ENCODE measurements at regions of chr6 and their contacts with region 1.

Region 1: DNA sequence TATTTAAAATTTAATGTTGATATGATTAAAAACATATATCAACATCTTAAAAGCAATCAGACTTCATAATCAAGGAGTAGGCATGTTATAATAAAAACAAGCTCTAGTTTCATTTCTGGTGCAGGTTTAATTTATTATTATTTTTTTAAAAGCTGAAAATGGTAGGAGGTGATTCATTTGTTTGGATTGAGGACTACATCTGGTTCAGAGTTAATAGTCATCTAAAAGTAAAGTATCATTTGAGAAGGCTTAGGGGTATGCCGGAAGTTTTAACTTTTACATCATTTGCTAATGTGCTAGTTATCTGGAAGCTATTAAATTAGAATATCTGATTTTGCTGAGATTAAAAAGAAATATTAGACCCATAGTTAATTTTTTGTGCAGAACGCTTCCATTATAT is 169.5 kb upstream of the LAMA2 start:
- DNase-seq: no peak
- ATAC-seq: no peak
- H3K4me3 ChIP-seq: no peak overlapping the region
- H3K4me3 Mint-ChIP-seq: no peak overlapping the region
- H3K27ac ChIP-seq: no peak overlapping the region
- H3K27ac Mint-ChIP-seq: no peak overlapping the region
- H3K4me1 ChIP-seq: no peaks in the 10 kb centered on the region
- H3K4me1 Mint-ChIP-seq: no peaks in the 10 kb centered on the region
- H3K27me3 ChIP-seq: peaks cover 0 to 3% of the 10 kb centered on the region in 2 experiments
- H3K27me3 Mint-ChIP-seq: peaks cover 31% of the 10 kb centered on the region
- CTCF ChIP-seq: no peak

Region 2: GRCh38 chr6:127879685-127880084 is 833.8 kb before region 1 on chr6:
- CTCF ChIA-PET with region 1: no interaction called
- POLR2A ChIA-PET with region 1: no interaction called
- intact Hi-C with region 1: no loop called
- DNase-seq: peak in 6 of 9 experiments; percentile 21 to 71 (median 46)
- ATAC-seq: peak; percentile 60
- H3K4me3 ChIP-seq: peak overlapping the region; percentile 19 to 24
- H3K4me3 Mint-ChIP-seq: peak overlapping the region; percentile 72
- H3K27ac ChIP-seq: peak overlapping the region in 1 of 2 experiments; percentile 40
- H3K27ac Mint-ChIP-seq: peak overlapping the region; percentile 88
- H3K4me1 ChIP-seq: peaks cover 84% of the 10 kb centered on the region
- H3K4me1 Mint-ChIP-seq: peaks cover 84% of the 10 kb centered on the region
- H3K27me3 ChIP-seq: no peaks in the 10 kb centered on the region
- H3K27me3 Mint-ChIP-seq: no peaks in the 10 kb centered on the region
- CTCF ChIP-seq: no peak

Region 3: DNA sequence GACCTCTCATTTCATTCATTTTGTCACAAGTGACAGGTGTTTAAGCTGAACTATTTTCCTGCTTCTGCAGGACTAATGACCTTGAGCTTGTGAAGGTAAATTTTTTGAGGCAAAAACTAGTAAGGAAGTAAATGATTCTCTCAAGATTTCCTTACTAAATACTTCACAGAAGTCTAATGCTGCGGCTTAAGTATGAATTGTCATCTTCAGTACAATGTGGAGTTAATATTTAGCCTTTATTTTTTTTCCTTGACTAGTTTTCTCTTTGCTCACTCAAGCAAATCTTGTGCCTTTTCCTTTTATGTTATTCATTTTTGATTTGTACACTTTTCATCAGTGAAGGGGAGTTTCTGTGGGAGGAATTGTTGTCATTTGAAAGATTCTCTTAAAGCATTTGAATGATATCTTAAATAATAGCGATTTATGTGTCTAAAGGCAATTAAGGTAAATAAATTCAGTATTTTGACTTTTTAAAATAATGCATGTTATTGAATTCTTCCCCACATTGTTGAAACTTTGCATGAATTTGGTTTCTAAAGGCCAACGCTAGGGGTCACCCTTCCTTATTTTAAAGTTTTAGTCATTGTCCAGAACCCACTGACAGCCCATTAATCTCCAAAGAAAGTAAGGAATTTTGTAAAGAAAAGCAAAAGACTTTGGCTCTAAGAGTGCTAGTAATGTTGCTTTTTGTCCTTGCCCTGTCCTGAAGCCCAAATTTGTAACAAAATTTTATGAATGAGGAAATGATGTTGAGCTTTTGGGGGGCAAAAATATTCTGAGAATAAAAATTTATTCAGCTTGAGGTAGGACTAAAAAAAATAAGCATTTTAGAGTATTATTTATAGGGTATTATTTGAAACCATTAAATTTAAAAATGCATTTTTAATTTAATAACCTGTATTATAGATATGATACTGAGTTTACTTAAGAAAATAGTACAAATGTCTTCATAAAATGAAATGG is 12.1 kb after region 1 on chr6:
- CTCF ChIA-PET with region 1: interaction called, 12 read pairs
- POLR2A ChIA-PET with region 1: no interaction called
- intact Hi-C with region 1: no loop called
- DNase-seq: peak in 3 of 9 experiments; percentile 12 to 37 (median 34)
- ATAC-seq: no peak
- H3K4me3 ChIP-seq: no peak overlapping the region
- H3K4me3 Mint-ChIP-seq: no peak overlapping the region
- H3K27ac ChIP-seq: no peak overlapping the region
- H3K27ac Mint-ChIP-seq: no peak overlapping the region
- H3K4me1 ChIP-seq: no peaks in the 10 kb centered on the region
- H3K4me1 Mint-ChIP-seq: no peaks in the 10 kb centered on the region
- H3K27me3 ChIP-seq: no peaks in the 10 kb centered on the region
- H3K27me3 Mint-ChIP-seq: peaks cover 18% of the 10 kb centered on the region
- CTCF ChIP-seq: peak; percentile 74

Measured in CD8-positive, alpha-beta T cell (primary cell).